Activated naive CD4-positive, alpha-beta T cell treated with anti-CD3 and anti-CD28 coated beads for 36 hours (primary cell): ENCODE measurements at regions of chr16 and their contacts with region 1.

Region 1: DNA sequence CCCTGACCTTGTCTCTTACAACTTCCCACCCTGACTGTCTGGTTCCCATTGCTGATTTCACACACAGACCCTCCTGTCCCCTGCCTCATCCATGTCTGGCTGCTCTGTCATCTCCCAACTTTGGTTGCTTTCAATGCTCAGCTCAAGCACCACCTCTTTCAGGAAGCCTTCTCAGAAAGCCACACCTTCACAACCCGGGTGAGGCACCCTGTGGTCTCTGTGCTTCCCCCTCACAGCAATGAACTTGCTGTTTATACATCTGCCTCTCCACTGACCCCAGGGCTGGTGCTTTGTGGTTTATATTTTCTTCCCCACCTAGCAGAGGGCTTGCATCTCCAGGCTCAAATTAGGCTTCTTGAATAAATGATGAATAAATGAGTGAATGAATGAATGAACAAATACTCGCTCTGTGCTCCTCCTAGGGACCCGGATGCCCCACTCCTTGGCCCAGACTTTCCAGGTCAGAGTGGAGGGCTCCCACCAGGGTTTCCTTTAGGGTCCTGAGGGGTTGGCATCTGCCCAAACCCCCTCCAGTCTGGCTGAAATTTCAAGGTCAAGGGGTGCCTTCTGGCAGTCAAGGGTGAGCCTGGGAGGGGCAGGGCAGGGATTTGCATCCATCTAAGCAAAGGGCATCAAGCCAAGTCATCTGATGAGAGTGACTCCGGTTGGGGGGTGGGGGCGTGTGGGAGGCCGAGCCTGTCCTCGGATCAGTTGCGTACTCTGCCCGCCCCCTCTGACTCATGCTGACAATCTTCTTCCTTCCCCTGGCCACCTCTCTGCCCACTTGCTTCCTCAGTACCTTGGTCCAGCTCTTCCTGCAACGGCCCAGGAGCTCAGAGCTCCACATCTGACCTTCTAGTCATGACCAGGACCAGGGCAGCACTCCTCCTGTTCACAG is at the start of gene ITGAX:
- DNase-seq: peak; percentile 91
- H3K4me3 Mint-ChIP-seq: no peak within 1 kb of the TSS
- H3K27ac Mint-ChIP-seq: peak within 1 kb of the TSS; percentile 80
- H3K4me1 Mint-ChIP-seq: peaks cover 27% of the 10 kb centered on the region
- H3K27me3 Mint-ChIP-seq: no peaks in the 10 kb centered on the region
- total RNA-seq, gene ITGAX: 2.4 to 2.9 TPM

Region 2: DNA sequence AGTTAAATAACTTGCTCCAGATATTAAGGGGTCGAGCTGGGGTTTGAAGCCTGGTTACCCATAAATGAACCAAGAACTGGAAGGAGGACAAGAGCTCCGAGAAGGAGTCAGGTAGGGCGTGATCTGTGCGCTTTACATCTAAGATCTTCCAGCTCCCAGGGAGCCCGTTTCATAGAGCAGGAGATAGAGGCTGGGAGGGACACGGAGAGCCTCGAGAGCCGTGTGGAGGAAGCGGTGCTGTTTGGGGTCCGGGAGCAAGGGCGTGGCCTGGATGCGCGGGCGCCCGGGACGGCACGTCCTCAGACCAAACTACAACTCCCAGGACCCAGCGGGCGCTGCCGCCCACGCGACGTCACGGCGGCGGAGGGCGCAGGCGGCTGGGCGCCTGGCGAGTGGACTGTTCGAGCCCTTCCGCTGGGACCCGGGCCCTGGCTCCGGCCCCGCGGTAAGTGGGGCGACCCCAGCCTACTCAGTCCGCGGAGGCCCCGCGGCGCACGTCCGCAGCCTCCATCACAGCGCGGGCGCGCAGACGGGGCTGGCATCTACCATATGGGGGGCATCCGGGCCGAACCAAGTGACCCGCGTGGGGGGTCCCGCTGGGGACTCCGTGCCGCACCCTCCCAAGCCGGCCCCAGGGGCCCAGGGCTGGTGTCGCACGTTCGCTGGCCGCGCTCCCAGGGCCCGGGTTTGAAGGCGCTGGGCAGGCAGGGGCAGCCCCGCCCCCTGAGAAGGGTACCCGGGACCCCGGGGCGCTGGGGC is 246.4 kb before region 1 on chr16 and contains the start of gene BCKDK:
- CTCF ChIA-PET with region 1: no interaction called
- intact Hi-C with region 1: no loop called
- DNase-seq: peak; percentile 74
- H3K4me3 Mint-ChIP-seq: peak within 1 kb of the TSS; percentile 89
- H3K27ac Mint-ChIP-seq: peak within 1 kb of the TSS; percentile 80
- H3K4me1 Mint-ChIP-seq: peaks cover 27% of the 10 kb centered on the region
- H3K27me3 Mint-ChIP-seq: no peaks in the 10 kb centered on the region
- total RNA-seq, gene BCKDK: 21.3 to 23.1 TPM

Region 3: DNA sequence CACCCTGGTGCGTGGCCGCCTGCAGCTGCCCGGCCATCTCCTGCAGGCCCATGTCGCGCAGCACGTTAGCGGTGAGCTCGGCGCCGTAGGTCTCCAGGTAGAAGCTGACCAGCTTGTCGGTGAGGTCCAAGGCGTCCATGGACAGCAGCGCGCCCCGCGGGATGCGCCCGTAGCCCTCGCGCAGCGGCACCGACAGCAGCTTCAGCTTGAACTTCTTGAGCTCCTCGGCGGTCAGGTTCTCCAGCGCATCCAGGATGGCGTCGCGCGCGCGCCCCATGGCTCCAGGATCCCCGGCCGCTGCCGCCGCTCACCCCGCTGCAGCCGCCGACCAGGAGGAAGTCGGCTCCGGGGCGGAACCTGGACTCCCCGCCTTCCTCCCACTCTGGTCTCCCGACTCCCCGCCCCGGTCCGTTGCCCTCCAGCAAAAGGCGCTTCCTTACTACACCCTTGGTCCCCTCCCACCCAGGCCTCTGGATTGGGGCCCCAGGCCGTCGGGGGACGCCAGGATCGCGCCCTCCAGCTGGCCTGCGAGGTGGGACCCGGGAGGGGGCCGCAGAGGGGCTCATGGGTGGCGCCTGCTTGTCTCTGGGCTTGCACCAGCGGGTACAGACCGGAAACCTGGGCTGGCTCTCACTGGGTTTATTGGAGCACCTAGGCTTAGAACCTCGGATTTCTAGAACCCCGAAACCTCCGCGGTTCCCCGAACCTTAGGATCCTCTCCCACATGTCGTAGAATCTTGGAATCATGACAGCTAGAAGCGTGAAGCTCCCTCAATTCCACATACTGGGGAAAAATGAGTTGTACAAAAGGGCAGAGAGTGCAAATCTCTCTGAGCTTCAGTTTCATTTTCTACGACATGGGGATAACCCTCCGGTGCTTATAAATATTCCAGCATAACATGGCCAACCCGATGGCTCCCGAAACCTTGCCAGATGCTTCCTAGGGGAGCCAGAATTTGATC is 151.9 kb before region 1 on chr16 and contains the start of gene PYCARD:
- CTCF ChIA-PET with region 1: no interaction called
- intact Hi-C with region 1: loop called (anchors 10 kb)
- DNase-seq: peak; percentile 31
- H3K4me3 Mint-ChIP-seq: peak within 1 kb of the TSS; percentile 71
- H3K27ac Mint-ChIP-seq: no peak within 1 kb of the TSS
- H3K4me1 Mint-ChIP-seq: peaks cover 46% of the 10 kb centered on the region
- H3K27me3 Mint-ChIP-seq: no peaks in the 10 kb centered on the region
- total RNA-seq, gene PYCARD: 2.4 to 2.5 TPM

Region 4: DNA sequence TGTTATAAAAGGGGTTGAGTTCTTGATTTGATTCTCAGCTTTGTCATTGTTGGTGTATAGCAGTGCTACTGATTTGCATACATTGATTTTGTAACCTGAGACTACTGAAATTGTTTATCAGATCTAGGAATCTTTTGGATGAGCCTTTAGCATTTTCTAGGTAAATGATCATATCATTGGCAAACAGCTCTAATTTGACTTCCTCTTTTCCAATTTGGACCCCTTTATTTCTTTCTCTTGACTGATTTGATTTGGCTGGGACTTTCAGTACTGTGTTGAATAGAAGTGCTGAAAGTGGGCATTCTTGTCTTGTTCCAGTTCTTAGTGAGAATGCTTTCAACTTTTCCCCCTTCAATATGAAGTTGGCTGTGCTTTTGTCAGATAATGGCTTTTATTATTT is 49.4 kb before region 1 on chr16:
- CTCF ChIA-PET with region 1: no interaction called
- intact Hi-C with region 1: no loop called
- DNase-seq: no peak
- H3K4me3 Mint-ChIP-seq: no peak overlapping the region
- H3K27ac Mint-ChIP-seq: no peak overlapping the region
- H3K4me1 Mint-ChIP-seq: peaks cover 8% of the 10 kb centered on the region
- H3K27me3 Mint-ChIP-seq: peaks cover 9% of the 10 kb centered on the region

Region 5: GRCh38 chr16:31873556-31874365 is 519.1 kb after region 1 on chr16 and contains the start of gene ZNF267:
- CTCF ChIA-PET with region 1: no interaction called
- intact Hi-C with region 1: loop called (anchors 2 kb)
- DNase-seq: peak; percentile 97
- H3K4me3 Mint-ChIP-seq: peak within 1 kb of the TSS; percentile 88
- H3K27ac Mint-ChIP-seq: peak within 1 kb of the TSS; percentile 96
- H3K4me1 Mint-ChIP-seq: peaks cover 79% of the 10 kb centered on the region
- H3K27me3 Mint-ChIP-seq: no peaks in the 10 kb centered on the region
- total RNA-seq, gene ZNF267: 58.7 to 59.7 TPM